BJ (cell line): ENCODE measurements at regions of chr1 and their contacts with region 1.

Region 1: DNA sequence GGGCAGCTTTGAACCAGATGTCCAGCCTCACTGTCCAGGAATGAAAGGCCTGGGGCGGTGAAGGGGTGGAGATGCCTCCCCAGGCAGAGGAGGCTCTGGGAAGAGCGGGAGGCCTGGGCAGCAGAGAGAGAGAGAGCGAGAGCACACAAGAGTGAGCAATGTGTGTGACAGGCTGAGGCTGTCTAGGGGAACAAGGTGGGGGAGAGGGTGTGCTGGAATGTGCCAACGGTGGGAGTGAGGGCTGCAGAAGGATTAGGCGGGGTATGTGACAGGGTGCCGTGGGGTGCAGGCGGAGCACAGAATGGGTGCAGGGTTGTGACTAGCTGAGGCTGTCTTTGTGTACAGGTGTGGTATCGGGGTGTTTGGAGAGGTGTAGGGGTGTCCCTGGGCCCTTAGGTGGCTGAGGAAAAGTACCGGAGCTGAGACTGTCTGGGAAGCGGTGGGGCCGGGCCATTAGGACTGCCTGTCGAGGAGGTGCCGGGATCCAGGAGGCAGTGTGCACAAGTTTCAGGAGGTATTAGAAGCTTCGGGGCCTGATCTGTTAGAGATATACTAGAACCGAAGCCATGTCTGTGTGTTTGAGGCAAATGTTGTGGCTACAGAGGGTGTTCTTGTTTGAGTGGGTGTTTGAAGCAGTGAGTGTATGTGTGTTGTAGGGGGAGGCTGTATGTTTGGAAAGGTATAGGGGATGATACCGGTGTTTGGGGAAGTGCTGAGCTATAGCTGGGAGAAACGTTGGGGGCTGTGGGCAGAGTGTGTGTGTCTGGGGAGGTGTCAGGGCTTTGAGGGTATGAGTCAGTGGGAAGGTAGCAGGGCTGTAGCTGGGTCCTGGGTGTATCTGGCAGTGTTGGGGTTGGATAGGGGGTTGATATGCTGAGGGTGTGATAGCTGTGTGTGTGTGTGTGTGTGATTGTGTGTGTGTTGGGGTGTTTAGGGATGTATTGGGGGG is 9.1 kb downstream of the AHDC1 start:
- DNase-seq: peak; percentile 60
- H3K4me3 ChIP-seq: no peak overlapping the region
- H3K27me3 ChIP-seq: no peaks in the 10 kb centered on the region
- CTCF ChIP-seq: no peak

Region 2: GRCh38 chr1:27568300-27569087 is 26.3 kb before region 1 on chr1:
- CTCF ChIA-PET with region 1: interaction called, 11 read pairs
- POLR2A ChIA-PET with region 1: no interaction called
- DNase-seq: peak; percentile 60
- H3K4me3 ChIP-seq: peak overlapping the region; percentile 17
- H3K27me3 ChIP-seq: no peaks in the 10 kb centered on the region
- CTCF ChIP-seq: peak; percentile 47; the same call in 1 of the 2 replicates

Region 3: DNA sequence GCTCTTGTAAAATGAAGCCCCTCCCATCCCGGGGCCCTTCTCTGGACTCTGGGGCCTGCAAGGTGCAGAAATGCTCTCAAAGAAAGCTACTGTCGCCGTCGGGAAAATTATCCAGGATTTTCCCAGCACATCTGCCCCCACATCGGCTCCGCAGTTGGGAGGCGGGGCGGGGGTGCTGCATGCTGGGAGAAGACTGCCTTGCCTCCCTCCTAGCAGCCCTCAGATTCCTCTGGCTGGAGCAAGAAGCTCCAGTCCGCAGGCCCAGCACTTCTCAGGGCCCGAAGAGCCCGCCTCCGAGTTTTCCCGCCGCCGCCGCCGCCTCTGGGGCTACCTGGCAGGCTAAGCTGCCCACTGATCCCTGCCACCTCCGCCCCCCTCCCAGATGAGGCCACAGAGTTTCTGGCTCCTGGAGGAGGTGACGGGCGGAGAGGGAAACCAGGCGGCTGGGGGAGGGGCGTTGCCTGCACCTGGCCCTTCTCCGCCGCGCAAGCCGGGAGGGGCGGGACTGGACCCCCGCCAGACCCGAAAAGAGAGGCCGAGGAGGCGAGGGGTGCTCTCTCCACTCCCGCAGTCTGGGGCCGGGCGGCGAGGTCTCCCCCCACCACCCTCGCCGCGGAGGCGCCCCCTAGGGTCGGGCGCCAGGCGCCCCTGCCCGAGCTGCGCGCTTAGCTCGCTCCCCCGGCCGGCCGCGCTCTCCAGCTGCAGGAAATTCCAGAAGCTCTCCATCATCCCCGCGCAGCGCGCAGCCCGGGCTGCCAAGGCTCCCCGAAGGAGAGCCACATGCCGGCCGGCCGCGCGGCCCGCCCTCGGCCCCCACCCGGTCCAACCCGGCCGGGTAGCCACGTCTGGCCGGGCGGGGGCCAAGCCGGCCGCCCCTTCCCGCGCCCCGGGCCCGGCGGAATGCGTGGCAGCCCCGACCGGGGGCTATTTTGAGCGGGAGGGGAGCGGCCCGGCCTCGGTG is 19.7 kb before region 1 on chr1:
- CTCF ChIA-PET with region 1: interaction called, 10 read pairs
- POLR2A ChIA-PET with region 1: interaction called, 4 read pairs
- DNase-seq: no peak
- H3K4me3 ChIP-seq: peak overlapping the region; percentile 32
- H3K27me3 ChIP-seq: no peaks in the 10 kb centered on the region
- CTCF ChIP-seq: peak; percentile 23; the same call in 1 of the 2 replicates

Region 4: DNA sequence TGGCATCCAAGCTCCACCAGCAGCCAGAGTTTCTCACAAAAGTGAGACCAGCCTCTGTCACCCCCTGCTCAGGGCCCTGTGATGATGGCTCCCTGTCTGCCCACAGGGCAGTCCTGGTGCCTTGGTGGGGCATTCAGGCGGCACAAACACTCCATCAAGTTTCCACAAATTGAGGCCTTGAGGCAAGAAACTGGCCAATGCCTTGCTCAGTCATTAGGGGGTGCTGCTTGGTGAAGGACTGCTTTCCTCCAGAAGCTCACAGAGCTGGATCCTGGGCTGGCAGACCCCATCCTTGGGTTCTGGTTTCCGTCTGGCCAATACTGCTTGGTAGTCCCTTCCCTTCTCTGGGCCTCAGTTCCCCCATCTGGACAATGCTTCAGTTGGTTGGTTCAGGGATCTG is 21.6 kb after region 1 on chr1:
- CTCF ChIA-PET with region 1: no interaction called
- POLR2A ChIA-PET with region 1: no interaction called
- DNase-seq: no peak
- H3K4me3 ChIP-seq: no peak overlapping the region
- H3K27me3 ChIP-seq: peaks cover 2% of the 10 kb centered on the region; the same call in 1 of the 2 replicates
- CTCF ChIP-seq: no peak